ENCODE measurements at regions of chr10 and their contacts with region 1.

Region 1: GRCh38 chr10:61961278-61961677 is 59.8 kb downstream of the ARID5B start:
- DNase-seq: peak; percentile 24
- H3K4me3 Mint-ChIP-seq: peak overlapping the region; percentile 21
- H3K27ac Mint-ChIP-seq: peak overlapping the region; percentile 71
- H3K4me1 Mint-ChIP-seq: peaks cover 86% of the 10 kb centered on the region
- H3K27me3 Mint-ChIP-seq: no peaks in the 10 kb centered on the region

Region 2: DNA sequence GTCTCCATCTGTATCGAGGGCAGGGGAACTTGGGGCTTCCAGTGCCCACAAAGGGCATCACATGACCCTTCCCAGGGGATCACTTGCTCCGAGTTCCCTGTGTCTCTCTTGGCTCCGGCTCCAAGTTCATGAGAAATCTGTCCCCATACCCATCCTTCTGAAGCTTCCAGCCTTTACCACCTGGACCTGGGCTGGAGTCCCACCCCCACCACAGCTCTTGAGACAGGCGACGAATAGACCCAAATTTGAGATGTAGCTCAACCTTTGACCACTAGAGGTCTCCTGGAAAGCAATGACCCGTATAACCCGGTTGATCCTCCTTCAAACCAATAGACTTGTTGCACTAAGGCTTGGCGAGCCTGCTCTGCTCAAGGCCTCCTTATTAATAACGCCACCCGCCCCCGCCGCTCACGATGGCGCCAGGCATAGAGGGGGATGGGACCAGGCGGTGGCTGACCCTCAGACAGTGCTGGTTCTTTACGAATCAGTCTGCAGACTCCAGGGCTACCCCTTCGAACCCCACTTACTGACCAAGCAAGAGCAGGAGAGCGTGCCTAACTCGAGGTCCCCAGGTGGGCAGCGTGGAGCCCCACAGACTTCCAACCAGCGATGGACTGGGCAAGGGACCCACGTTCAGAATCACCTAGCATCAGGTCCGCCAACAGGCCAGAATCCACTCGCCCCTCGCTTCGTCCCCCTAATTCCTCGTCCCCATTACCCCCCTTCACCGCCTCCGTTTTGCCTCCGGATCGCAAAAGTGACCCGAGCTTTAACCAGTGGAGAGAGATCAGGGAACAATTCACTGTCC is 64.2 kb before region 1 on chr10:
- intact Hi-C with region 1: loop called (anchors 1 kb)
- DNase-seq: peak; percentile 56
- H3K4me3 Mint-ChIP-seq: peak overlapping the region; percentile 87
- H3K27ac Mint-ChIP-seq: peak overlapping the region; percentile 90
- H3K4me1 Mint-ChIP-seq: peaks cover 38% of the 10 kb centered on the region
- H3K27me3 Mint-ChIP-seq: peaks cover 3% of the 10 kb centered on the region